SK-N-SH (cell line): ENCODE measurements at regions of chr11 and their contacts with region 1.

Region 1: DNA sequence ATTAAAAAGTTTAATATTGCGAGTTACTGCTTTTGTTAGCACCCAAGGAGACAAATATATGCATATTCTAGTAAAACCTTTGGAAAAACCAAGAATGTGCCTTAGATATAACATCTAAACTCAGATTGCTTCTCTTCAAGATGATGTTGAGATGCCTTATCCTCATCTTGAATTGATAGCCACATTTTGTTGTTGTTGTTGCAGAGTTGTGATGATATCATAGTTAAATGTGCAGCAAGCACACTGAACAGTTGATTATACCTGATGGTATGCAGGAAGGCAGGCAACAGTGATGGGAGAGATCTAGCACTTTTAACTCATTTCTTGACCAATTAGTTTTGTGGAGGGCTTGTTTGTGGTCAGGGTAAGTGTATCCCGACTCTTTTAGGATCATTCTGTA is 48.0 kb downstream of the KDM2A start:
- DNase-seq: no peak
- H3K4me3 ChIP-seq: no peak overlapping the region
- H3K27ac ChIP-seq: peak overlapping the region; percentile 29 to 79
- H3K4me1 ChIP-seq: peaks cover 0 to 15% of the 10 kb centered on the region in 2 experiments; a peak in 2 of 4 replicates
- H3K27me3 ChIP-seq: no peaks in the 10 kb centered on the region
- CTCF ChIP-seq: no peak
- EP300 ChIP-seq: no peak
- RAD21 ChIP-seq: no peak

Region 2: DNA sequence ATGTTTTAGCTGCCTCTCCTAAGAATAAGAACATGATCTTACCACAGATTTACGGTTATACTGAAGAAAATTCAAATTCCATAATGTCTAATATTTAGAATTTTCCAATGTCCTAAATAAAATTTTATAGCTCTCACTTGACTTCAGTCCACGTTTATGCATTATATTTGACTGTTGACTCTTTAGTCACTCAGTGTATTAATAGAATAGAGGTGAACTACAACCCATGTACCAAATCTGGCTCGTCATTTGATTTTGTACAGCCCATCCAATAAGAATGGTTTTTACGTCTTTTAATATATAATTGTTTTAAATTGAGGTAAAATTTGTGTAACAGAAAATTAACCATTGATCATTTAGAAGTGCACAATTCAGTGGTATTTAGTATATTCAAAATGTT is 13.1 kb before region 1 on chr11:
- CTCF ChIA-PET with region 1: interaction called, 13 read pairs
- POLR2A ChIA-PET with region 1: no interaction called
- DNase-seq: no peak
- H3K4me3 ChIP-seq: no peak overlapping the region
- H3K27ac ChIP-seq: no peak overlapping the region
- H3K4me1 ChIP-seq: no peaks in the 10 kb centered on the region; a peak in 1 of 4 replicates
- H3K27me3 ChIP-seq: no peaks in the 10 kb centered on the region
- CTCF ChIP-seq: no peak
- EP300 ChIP-seq: no peak
- RAD21 ChIP-seq: no peak

Region 3: GRCh38 chr11:67178878-67179277 is 11.8 kb after region 1 on chr11:
- CTCF ChIA-PET with region 1: interaction called, 18 read pairs
- POLR2A ChIA-PET with region 1: no interaction called
- DNase-seq: no peak
- H3K4me3 ChIP-seq: no peak overlapping the region
- H3K27ac ChIP-seq: no peak overlapping the region
- H3K4me1 ChIP-seq: peaks cover 0 to 27% of the 10 kb centered on the region in 2 experiments; a peak in 1 of 4 replicates
- H3K27me3 ChIP-seq: no peaks in the 10 kb centered on the region
- CTCF ChIP-seq: no peak
- EP300 ChIP-seq: no peak
- RAD21 ChIP-seq: no peak

Region 4: DNA sequence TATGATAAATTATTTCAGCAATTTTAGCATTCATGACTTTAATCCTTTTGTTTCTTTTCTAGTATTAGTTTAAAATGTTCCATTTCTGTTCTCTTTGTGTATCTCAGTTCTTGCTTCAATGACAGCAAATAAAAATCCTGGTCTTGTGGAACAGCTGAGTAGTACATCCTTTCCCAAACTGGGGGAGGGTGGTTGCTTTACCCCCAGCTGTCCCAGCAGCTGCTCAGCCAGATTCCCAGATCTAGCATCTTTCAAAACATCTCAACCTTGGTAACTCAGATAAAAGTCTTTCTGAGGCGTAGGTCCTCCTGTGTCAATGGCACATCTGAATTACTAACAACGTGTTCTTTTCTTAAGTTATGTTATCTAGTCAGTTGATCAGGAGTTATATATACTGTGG is 27.0 kb after region 1 on chr11:
- CTCF ChIA-PET with region 1: no interaction called
- POLR2A ChIA-PET with region 1: no interaction called
- DNase-seq: no peak
- H3K4me3 ChIP-seq: no peak overlapping the region
- H3K27ac ChIP-seq: no peak overlapping the region
- H3K4me1 ChIP-seq: peaks cover 0 to 22% of the 10 kb centered on the region in 2 experiments; a peak in 1 of 4 replicates
- H3K27me3 ChIP-seq: no peaks in the 10 kb centered on the region
- CTCF ChIP-seq: no peak
- EP300 ChIP-seq: no peak
- RAD21 ChIP-seq: no peak